SK-N-SH (cell line): ENCODE measurements at regions of chr3 and their contacts with region 1.

Region 1: DNA sequence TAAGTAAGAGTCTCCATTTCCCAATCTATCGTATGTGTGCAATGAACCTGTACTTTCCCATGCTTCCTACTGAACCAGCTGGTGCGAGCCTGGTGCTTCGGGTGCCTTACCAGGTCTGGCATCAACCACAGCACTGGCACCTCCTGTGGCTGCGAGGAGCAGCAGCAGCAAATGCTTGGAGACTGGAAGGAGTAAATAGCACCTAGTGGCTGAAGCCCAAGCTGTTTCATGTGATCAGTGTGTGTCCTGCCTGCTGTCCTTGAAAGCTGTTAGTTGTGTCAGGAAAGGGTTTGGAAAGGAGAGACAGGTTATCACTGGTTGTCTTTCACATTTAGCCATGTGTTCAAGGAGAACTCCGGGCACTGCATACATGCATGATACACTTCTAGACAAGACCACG is 31.8 kb downstream of the PCOLCE2 start:
- DNase-seq: peak; percentile 65
- H3K4me3 ChIP-seq: no peak overlapping the region
- H3K27ac ChIP-seq: no peak overlapping the region
- H3K4me1 ChIP-seq: peaks cover 2 to 15% of the 10 kb centered on the region in 2 experiments; a peak in 3 of 4 replicates
- H3K27me3 ChIP-seq: no peaks in the 10 kb centered on the region
- CTCF ChIP-seq: peak; percentile 59
- EP300 ChIP-seq: no peak
- RAD21 ChIP-seq: peak; percentile 53

Region 2: DNA sequence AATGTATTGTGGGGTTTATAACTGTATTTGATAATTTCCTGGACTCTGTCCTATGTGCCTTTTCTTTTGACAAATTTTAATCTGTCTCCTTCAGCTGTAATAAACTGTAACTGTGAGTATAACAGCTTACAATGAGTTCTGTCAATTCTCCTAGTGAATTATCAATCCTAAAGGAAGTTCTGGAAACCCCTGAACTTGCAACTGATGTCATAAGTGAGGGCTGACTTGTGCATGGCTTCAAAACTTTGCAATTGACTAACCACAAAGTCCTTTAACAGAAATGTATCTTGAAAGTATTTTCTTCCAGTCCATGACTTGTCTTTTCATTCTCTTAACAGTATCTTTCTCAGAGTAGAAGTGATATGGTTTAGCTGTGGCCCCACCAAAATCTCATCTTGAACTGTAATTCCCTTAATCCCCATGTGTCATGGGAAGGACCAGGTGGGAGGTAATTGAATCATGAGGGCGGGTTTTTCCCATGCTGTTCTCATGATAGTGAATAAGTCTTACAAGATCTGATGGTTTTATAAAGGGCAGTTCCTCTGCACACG is 816.0 kb before region 1 on chr3:
- CTCF ChIA-PET with region 1: no interaction called
- POLR2A ChIA-PET with region 1: no interaction called
- DNase-seq: no peak
- H3K4me3 ChIP-seq: no peak overlapping the region
- H3K27ac ChIP-seq: no peak overlapping the region
- H3K4me1 ChIP-seq: no peaks in the 10 kb centered on the region
- H3K27me3 ChIP-seq: no peaks in the 10 kb centered on the region
- CTCF ChIP-seq: no peak
- EP300 ChIP-seq: no peak
- RAD21 ChIP-seq: no peak

Region 3: GRCh38 chr3:142239421-142239820 is 617.6 kb before region 1 on chr3:
- CTCF ChIA-PET with region 1: no interaction called
- POLR2A ChIA-PET with region 1: no interaction called
- DNase-seq: no peak
- H3K4me3 ChIP-seq: no peak overlapping the region
- H3K27ac ChIP-seq: no peak overlapping the region
- H3K4me1 ChIP-seq: no peaks in the 10 kb centered on the region
- H3K27me3 ChIP-seq: no peaks in the 10 kb centered on the region
- CTCF ChIP-seq: no peak
- EP300 ChIP-seq: no peak
- RAD21 ChIP-seq: no peak

Region 4: DNA sequence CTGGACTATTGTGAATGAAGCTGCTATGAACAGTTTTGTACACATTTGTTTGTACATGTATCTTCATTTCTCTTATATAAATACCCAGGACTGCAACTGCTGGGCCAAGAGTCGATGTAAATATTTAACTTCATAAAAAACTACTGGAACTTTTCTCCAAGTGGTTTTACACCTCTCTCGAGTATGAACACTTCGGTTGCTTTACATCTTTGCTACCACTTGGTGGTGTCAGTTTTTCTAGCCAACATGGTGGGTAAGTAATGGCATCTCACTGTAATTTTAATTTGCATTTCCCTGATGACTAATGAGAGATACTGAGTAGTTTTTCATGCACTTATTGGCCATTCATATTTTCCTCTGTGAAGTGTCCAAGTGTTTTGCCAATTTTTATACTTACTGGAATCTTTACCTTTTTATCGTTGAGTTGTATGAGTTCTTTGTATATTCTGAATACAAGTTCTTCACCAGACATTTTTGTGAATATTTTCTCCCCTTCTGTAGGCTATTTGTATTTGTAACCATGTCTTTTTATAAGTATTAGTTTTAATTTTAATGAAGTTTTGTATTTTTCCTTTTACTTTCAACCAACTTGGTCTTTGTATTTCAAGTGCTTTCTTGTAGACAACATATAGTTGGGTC is 12.6 kb before region 1 on chr3:
- CTCF ChIA-PET with region 1: interaction called, 13 read pairs
- POLR2A ChIA-PET with region 1: no interaction called
- DNase-seq: peak; percentile 25
- H3K4me3 ChIP-seq: no peak overlapping the region
- H3K27ac ChIP-seq: no peak overlapping the region
- H3K4me1 ChIP-seq: no peaks in the 10 kb centered on the region
- H3K27me3 ChIP-seq: no peaks in the 10 kb centered on the region
- CTCF ChIP-seq: peak; percentile 54
- EP300 ChIP-seq: no peak
- RAD21 ChIP-seq: peak; percentile 44

Region 5: DNA sequence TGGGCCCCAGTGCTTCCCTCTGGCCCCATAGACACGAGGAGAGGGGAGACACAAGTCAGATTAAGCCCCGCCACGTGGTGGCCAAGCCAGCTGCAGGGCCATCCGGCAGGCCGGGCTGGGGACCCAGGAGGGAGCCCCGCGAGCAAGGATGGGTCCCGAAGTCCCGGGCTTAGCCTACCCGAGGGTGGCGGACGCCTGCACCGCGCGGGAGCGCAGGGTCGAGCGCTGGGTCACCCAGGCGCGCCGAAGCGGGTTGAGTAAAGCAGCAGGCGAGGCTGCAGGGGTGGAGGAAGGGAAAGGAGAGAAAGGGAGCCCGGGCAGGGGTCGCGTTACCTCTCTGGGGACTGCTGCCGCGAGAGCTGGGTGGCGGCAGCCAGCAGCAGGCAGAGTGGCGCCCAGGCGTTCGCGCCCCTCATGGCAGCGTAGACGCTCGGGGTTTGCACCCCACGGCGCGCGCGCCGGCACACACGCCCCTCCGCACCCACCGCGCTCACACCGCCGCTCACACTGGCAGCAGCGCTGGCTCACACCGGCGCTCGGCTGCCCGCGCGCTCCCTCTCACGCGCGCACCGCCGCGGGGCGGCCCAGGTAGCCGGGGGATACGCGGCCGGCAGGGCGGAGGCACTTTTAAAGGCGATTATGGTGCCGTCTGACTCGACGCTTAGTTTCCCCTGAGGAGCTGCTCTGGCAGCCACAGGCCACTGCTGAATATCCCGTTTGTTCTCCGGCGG is 31.6 kb after region 1 on chr3 and contains the start of gene PCOLCE2:
- CTCF ChIA-PET with region 1: interaction called, 14 read pairs
- POLR2A ChIA-PET with region 1: no interaction called
- DNase-seq: peak; percentile 73
- H3K4me3 ChIP-seq: peak within 1 kb of the TSS; percentile 61 to 66
- H3K27ac ChIP-seq: peak within 1 kb of the TSS in 1 of 2 experiments; percentile 68; a peak in 2 of 4 replicates
- H3K4me1 ChIP-seq: peaks cover 0 to 14% of the 10 kb centered on the region in 2 experiments; a peak in 2 of 4 replicates
- H3K27me3 ChIP-seq: no peaks in the 10 kb centered on the region
- CTCF ChIP-seq: no peak
- EP300 ChIP-seq: no peak
- RAD21 ChIP-seq: no peak
- polyA plus RNA-seq, gene PCOLCE2: 22.2 and 25.4 TPM in 2 replicates